ENCODE measurements at regions of chr2 and their contacts with region 1.

Region 1: GRCh38 chr2:237581751-237582746 is 8.5 kb downstream of the RAB17 start:
- DNase-seq: peak; percentile 62
- H3K4me3 ChIP-seq: no peak overlapping the region
- H3K27ac ChIP-seq: no peak overlapping the region
- H3K4me1 ChIP-seq: no peaks in the 10 kb centered on the region
- CTCF ChIP-seq: peak; percentile 70

Region 2: DNA sequence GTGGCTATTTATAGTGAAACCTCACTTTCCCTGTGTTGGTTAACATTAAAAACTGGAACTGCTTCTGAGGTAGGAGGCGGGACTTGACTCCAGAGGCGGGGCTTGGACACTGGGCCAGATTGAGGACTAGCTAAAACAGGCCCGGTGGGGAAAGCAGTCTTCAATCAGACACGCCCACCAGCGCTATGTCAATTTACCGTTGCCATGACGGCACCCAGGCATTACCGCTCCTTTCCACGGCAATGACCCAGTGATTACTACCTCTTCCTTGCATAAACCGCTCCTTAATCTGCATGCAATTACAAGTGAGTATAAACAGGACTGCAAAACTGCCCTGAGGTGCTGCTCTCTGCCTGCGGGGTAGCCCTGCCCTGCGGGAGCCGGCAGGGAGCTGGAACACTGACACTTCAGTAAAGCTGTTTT is 80.6 kb after region 1 on chr2:
- CTCF ChIA-PET with region 1: no interaction called
- POLR2A ChIA-PET with region 1: no interaction called
- intact Hi-C with region 1: loop called (anchors 1 kb)
- DNase-seq: peak; percentile 86
- H3K4me3 ChIP-seq: peak overlapping the region; percentile 56
- H3K27ac ChIP-seq: peak overlapping the region; percentile 70
- H3K4me1 ChIP-seq: peaks cover 72% of the 10 kb centered on the region
- CTCF ChIP-seq: no peak

Region 3: GRCh38 chr2:237774802-237775553 is 192.9 kb after region 1 on chr2:
- CTCF ChIA-PET with region 1: no interaction called
- POLR2A ChIA-PET with region 1: no interaction called
- intact Hi-C with region 1: loop called (anchors 10 kb)
- DNase-seq: peak; percentile 68
- H3K4me3 ChIP-seq: no peak overlapping the region
- H3K27ac ChIP-seq: no peak overlapping the region
- H3K4me1 ChIP-seq: no peaks in the 10 kb centered on the region
- CTCF ChIP-seq: peak; percentile 84